ENCODE measurements at regions of chr12 and their contacts with region 1.

Region 1: DNA sequence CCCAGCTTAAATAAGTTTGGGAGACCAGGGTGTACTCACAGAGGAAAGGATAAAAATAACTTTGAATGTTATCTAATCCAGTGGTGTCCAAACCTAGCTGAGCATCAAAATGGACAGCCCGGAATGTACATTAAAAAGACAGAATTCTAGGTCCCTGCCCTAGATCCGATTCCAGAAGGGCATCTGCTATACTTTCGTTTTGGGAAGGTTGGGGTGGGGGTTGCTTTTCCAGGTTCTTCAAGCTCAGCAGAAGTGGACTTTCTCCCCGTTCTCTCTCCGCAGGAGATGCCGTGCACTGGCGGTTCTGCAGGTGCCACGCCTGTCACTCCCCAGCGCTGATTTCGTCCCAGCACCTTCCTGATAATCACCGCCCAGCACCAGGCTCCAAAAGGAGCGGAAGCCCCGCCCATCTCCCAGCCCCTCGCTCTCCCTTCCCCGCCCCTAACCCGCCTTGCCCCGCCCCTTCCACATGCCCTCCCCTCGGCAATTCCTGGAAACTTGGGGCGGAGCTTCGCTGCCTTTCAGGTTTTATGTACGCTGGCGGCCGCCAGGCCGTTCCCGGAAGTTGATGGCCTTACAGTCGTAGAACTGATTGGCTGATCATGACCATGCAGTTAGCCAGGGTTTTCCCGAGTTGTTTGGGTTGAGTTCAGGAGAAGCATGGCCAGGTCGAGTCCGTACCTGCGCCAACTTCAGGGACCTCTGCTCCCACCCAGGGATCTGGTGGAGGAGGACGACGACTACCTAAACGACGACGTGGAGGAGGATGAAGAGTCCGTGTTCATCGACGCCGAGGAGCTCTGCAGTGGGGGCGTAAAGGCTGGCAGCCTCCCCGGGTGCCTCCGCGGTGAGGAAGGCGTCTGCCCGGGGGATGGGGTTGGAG is at the start of gene HELB:
- DNase-seq: peak; percentile 99
- H3K4me3 Mint-ChIP-seq: peak within 1 kb of the TSS; percentile 100
- H3K27ac Mint-ChIP-seq: peak within 1 kb of the TSS; percentile 100
- H3K4me1 Mint-ChIP-seq: peaks cover 36% of the 10 kb centered on the region
- H3K27me3 Mint-ChIP-seq: no peaks in the 10 kb centered on the region
- total RNA-seq, gene HELB: 23.0 to 23.7 TPM

Region 2: DNA sequence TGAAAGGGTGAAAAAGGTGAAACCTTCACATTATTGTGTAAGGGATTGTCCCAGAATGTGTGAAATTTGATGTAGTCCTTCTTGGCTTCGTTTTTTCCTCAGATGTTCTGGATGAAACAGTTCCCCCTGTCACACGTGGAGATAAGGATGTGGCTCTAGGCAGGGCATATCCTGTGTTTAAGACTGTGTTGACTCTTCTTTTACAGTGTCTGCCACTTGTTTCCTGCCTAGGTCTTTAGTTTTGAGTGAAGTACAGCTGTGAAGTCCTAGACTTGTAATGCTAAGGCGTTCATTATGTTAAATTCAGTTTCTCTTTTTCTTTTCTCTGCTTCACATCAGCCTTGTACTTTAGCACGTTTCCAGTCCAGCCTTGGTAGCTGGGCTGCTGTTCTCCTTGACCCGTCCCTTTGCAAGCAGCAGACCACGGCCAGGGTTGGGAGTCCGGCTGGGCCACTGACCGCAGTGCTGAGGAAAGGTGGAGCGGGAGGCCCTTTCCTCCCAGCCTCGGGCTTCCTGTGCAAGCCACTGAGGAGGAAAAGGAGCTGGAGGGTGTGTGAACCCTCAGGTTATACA is 1632.8 kb before region 1 on chr12:
- CTCF ChIA-PET with region 1: no interaction called
- intact Hi-C with region 1: loop called (anchors 5 kb)
- DNase-seq: peak; percentile 63
- H3K4me3 Mint-ChIP-seq: peak overlapping the region; percentile 78
- H3K27ac Mint-ChIP-seq: peak overlapping the region; percentile 92
- H3K4me1 Mint-ChIP-seq: peaks cover 93% of the 10 kb centered on the region
- H3K27me3 Mint-ChIP-seq: no peaks in the 10 kb centered on the region

Region 3: GRCh38 chr12:66144791-66145754 is 157.1 kb before region 1 on chr12:
- CTCF ChIA-PET with region 1: no interaction called
- intact Hi-C with region 1: no loop called
- DNase-seq: peak; percentile 49
- H3K4me3 Mint-ChIP-seq: no peak overlapping the region
- H3K27ac Mint-ChIP-seq: peak overlapping the region; percentile 86
- H3K4me1 Mint-ChIP-seq: peaks cover 16% of the 10 kb centered on the region
- H3K27me3 Mint-ChIP-seq: no peaks in the 10 kb centered on the region

Region 4: DNA sequence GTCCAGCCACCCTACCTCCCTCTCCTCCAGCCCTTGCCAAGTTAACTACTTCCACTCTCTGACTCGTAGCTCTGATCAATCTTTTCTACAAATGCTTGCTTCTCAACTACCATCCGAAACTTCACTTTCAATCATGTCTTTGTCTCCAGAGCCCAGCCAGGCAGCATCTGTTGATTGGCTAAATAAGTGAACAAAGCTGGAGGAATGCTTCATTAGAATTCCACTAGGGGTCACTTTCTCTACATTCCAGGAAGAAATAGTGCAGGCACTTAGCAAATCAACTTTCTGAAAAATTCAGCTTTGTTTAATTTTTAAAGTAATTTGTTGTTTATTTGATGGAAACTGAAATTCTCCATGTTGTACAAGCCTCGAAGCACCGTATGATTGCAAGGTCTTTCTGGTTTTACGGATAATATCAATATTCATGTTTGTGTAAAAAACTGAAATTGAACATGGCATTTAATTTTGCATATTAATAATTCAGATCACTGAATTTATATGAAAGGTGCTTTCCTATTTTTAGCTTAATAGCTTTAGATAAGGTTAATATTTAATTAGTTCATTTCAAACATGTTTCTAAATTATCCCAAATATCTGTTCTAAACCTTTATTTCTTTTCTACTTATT is 32.3 kb before region 1 on chr12:
- CTCF ChIA-PET with region 1: interaction called, 8 read pairs
- intact Hi-C with region 1: loop called (anchors 1 kb)
- DNase-seq: peak; percentile 52
- H3K4me3 Mint-ChIP-seq: no peak overlapping the region
- H3K27ac Mint-ChIP-seq: no peak overlapping the region
- H3K4me1 Mint-ChIP-seq: peaks cover 5% of the 10 kb centered on the region
- H3K27me3 Mint-ChIP-seq: peaks cover 3% of the 10 kb centered on the region

Region 5: GRCh38 chr12:66312189-66312588 is 10.0 kb after region 1 on chr12:
- CTCF ChIA-PET with region 1: no interaction called
- intact Hi-C with region 1: loop called (anchors 1 kb)
- DNase-seq: no peak
- H3K4me3 Mint-ChIP-seq: peak overlapping the region; percentile 19
- H3K27ac Mint-ChIP-seq: peak overlapping the region; percentile 50
- H3K4me1 Mint-ChIP-seq: peaks cover 70% of the 10 kb centered on the region
- H3K27me3 Mint-ChIP-seq: no peaks in the 10 kb centered on the region

Region 6: GRCh38 chr12:66388517-66388916 is 86.3 kb after region 1 on chr12:
- CTCF ChIA-PET with region 1: no interaction called
- intact Hi-C with region 1: no loop called
- DNase-seq: no peak
- H3K4me3 Mint-ChIP-seq: no peak overlapping the region
- H3K27ac Mint-ChIP-seq: no peak overlapping the region
- H3K4me1 Mint-ChIP-seq: peaks cover 2% of the 10 kb centered on the region
- H3K27me3 Mint-ChIP-seq: no peaks in the 10 kb centered on the region

Region 7: GRCh38 chr12:67981287-67982162 is 1679.3 kb after region 1 on chr12:
- CTCF ChIA-PET with region 1: no interaction called
- intact Hi-C with region 1: loop called (anchors 10 kb)
- DNase-seq: peak; percentile 31
- H3K4me3 Mint-ChIP-seq: no peak overlapping the region
- H3K27ac Mint-ChIP-seq: no peak overlapping the region
- H3K4me1 Mint-ChIP-seq: peaks cover 17% of the 10 kb centered on the region
- H3K27me3 Mint-ChIP-seq: peaks cover 1% of the 10 kb centered on the region

Measured in activated naive CD4-positive, alpha-beta T cell treated with anti-CD3 and anti-CD28 coated beads for 36 hours (primary cell).